ENCODE measurements at regions of chr6 and their contacts with region 1.

Region 1: DNA sequence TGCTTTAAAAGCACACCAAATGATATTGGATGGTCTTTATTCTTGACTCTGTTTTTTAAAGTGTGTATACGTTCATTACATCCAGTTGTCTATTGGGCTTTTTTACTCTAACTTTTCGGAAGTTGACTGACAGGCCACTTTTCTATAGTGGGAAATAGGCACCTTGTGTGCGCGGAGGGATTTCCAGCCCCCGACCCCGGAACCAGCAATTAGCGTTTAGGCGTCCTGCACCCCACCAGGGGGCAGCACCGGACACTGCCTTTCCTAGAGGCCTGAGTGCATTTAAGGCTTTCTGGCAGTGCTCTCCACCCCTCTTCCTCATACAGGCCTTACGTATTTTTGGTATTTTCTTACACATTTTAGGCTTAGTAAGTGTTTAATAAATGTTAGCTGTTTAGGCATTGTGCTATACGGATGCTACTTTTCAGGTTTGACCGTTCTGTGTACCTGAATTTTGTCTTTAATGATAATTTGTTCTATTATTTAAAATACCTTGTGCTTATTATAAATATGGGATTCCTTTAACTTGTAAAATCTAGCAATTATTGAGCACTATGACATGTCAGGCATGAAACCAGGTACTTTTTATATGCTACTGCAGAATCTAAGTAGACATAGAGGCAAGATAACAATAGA is 231.8 kb downstream of the BCKDHB start:
- DNase-seq: peak in 1 of 2 experiments; percentile 60
- H3K4me3 ChIP-seq: no peak overlapping the region
- H3K27ac ChIP-seq: no peak overlapping the region
- H3K4me1 ChIP-seq: no peaks in the 10 kb centered on the region
- H3K27me3 ChIP-seq: no peaks in the 10 kb centered on the region
- CTCF ChIP-seq: peak; percentile 73

Region 2: DNA sequence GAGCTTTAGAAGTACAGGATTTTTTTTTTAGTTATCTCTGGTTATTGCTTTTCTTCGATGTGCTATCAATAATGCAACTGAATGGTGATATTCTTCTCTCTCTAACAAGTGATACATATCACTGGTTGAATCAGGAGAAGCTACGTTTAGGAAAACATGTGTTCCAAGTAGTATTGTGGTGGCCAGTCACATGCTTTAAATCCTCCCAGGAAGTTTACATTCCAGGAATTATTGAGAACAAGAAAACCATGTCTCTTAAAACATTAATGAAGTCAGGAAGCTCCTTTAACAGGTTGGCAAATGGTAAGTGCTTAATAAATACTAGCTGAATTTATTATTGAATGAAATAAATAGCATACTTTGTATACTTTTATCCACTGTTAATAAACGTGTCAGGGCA is 139.3 kb after region 1 on chr6:
- CTCF ChIA-PET with region 1: no interaction called
- POLR2A ChIA-PET with region 1: no interaction called
- intact Hi-C with region 1: loop called (anchors 10 kb)
- DNase-seq: no peak
- H3K4me3 ChIP-seq: no peak overlapping the region
- H3K27ac ChIP-seq: no peak overlapping the region
- H3K4me1 ChIP-seq: no peaks in the 10 kb centered on the region
- H3K27me3 ChIP-seq: no peaks in the 10 kb centered on the region
- CTCF ChIP-seq: no peak

Region 3: GRCh38 chr6:80733641-80734040 is 395.3 kb after region 1 on chr6:
- CTCF ChIA-PET with region 1: no interaction called
- POLR2A ChIA-PET with region 1: no interaction called
- intact Hi-C with region 1: loop called (anchors 10 kb)
- DNase-seq: no peak
- H3K4me3 ChIP-seq: no peak overlapping the region
- H3K27ac ChIP-seq: no peak overlapping the region
- H3K4me1 ChIP-seq: no peaks in the 10 kb centered on the region
- H3K27me3 ChIP-seq: no peaks in the 10 kb centered on the region
- CTCF ChIP-seq: no peak